ENCODE measurements at regions of chr6 and their contacts with region 1.

Region 1: DNA sequence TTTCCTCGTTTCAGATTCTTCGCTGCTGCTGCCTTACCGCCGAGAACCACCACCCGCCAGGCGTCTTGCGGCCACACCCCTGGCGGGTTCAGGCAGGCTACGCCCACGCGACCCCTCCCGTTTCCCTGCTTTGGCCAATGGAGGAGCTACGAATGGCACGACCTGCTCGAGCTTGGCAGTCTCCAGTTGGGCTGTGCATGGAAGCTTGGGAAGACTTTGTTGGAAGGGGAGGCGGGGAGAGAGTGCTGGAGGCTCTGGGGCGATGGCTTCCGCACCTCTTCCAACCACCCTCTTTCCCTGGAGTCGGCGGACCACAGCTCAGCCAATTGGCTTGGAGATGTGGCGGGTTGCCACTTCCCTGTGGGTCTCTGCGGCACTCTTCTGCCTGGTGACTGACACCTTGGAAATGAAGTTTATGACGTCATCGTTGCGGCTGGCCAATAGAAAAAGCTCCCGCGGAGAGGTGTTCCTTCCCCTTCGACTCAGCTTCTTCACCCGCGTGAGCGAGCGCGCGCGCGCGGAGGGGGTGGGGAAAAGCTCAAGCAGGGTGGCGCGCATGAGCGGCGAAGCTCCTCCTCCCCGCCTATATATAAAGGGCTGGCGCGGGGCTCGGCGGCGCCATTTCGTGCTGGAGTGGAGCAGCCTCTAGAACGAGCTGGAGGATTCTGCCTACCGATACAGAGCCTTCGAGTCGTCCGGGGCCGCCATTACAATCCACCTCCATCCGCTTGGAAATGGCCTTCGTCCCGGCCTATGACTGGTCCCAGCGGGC is 3.4 kb downstream of the BRD2 start:
- DNase-seq: peak; percentile 100
- H3K4me3 ChIP-seq: peak overlapping the region; percentile 83 to 96 (median 91)
- H3K27ac ChIP-seq: peak overlapping the region; percentile 99
- H3K4me1 ChIP-seq: peaks cover 29% of the 10 kb centered on the region
- H3K27me3 ChIP-seq: no peaks in the 10 kb centered on the region
- CTCF ChIP-seq: no peak
- POLR2A ChIP-seq: peak; percentile 100

Region 2: DNA sequence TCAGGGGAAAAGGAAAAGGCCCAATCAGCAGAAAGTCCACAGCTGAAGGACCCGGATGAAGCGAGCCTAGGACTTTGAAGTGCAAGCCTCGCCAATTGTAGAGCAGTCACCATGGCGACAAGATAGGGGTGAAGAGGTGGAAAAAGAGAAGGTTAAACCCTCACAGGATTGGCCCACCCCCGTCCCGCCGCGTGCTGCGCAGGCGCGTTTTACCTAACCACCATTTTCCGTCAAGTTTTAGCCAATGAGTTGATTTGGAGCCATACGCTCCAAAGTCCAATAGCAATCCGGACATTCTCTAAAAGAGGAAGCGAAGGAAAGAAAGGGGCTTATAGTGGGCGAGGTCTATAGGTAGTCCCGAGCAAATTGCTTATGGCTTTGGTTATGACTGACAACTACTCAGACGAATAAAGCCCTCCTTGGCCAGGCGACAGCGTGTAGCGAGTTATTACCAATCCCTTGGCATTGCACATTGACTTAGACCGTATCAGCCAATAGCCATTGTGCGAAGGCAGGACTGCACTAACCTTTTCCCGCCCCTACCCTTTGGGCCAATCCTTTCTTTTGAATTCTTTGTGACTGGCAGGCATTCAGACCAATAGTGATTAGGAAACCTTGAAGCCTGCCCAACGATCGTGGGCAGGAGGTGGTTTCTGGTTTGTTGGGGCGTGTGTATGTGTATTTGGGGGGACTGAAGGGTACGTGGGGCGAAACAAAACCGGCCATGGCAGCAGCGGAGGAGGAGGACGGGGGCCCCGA is 793.8 kb before region 1 on chr6 and contains the start of gene RNF5:
- CTCF ChIA-PET with region 1: no interaction called
- POLR2A ChIA-PET with region 1: no interaction called
- dilution Hi-C with region 1: no loop called
- intact Hi-C with region 1: loop called (anchors 5 kb)
- DNase-seq: peak; percentile 100
- H3K4me3 ChIP-seq: peak within 1 kb of the TSS; percentile 56 to 67 (median 66)
- H3K27ac ChIP-seq: peak within 1 kb of the TSS; percentile 83
- H3K4me1 ChIP-seq: peaks cover 30% of the 10 kb centered on the region
- H3K27me3 ChIP-seq: no peaks in the 10 kb centered on the region
- CTCF ChIP-seq: no peak
- POLR2A ChIP-seq: no peak
- total RNA-seq, gene RNF5: 48.0 and 49.2 TPM in 2 replicates

Region 3: DNA sequence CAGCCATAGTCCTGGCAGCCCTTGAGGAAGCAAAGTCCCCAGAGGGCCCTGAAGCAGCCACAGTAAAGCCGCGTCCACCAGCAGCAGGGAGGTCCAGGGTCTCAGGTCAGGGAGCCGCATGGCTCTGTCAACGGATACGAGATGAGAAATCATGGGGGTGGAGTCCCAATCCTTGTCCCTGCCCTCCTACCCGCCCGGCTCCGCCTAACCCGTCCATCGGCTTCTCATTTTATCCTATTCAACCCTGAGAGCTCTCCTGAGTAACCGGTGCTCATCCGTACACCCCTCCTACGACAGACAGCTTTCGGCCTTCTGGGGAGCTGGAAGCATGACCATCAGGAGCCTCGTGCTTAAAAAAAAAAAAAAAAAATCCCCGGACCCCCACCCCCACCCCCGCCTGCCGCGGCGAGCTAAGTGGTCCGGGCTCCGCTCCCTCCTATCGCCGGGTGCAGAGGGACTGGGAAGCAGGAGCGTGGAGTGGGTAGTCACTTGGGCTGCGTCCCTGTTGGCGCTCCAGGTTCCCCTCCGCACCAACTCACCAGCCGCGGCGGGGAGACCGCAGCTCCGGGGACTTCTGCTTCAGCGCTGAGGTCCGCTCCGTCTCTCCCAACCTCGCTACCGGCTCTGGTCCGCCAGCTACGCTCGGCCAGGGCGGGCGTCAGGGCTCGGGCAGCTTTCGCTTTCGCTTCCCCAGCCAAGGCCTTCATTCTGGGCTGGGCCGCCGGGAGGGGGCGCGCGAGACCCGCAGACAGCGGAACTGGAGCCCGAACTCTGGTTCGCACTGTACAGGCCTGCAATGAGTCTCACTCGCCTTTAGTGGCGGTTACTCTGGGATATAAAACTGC is 133.4 kb before region 1 on chr6 and contains the start of gene TAP2:
- CTCF ChIA-PET with region 1: interaction called, 15 read pairs
- POLR2A ChIA-PET with region 1: interaction called, 16 read pairs
- dilution Hi-C with region 1: no loop called
- intact Hi-C with region 1: loop called (anchors 5 kb)
- DNase-seq: peak; percentile 94
- H3K4me3 ChIP-seq: peak within 1 kb of the TSS; percentile 30 to 89 (median 70)
- H3K27ac ChIP-seq: peak within 1 kb of the TSS; percentile 54
- H3K4me1 ChIP-seq: peaks cover 9% of the 10 kb centered on the region
- H3K27me3 ChIP-seq: no peaks in the 10 kb centered on the region
- CTCF ChIP-seq: peak; percentile 92 to 99
- POLR2A ChIP-seq: peak; percentile 64
- total RNA-seq, gene TAP2: 49.7 and 57.8 TPM in 2 replicates

Region 4: GRCh38 chr6:32885698-32886286 is 86.0 kb before region 1 on chr6:
- CTCF ChIA-PET with region 1: interaction called, 16 read pairs
- POLR2A ChIA-PET with region 1: interaction called, 14 read pairs
- dilution Hi-C with region 1: no loop called
- intact Hi-C with region 1: no loop called
- DNase-seq: peak; percentile 72
- H3K4me3 ChIP-seq: no peak overlapping the region
- H3K27ac ChIP-seq: no peak overlapping the region
- H3K4me1 ChIP-seq: peaks cover under 1% of the 10 kb centered on the region
- H3K27me3 ChIP-seq: peaks cover 28 to 30% of the 10 kb centered on the region in 2 experiments
- CTCF ChIP-seq: peak; percentile 34
- POLR2A ChIP-seq: no peak

Region 5: GRCh38 chr6:32933636-32934085 is 38.1 kb before region 1 on chr6:
- CTCF ChIA-PET with region 1: interaction called, 187 read pairs
- POLR2A ChIA-PET with region 1: interaction called, 30 read pairs
- dilution Hi-C with region 1: no loop called
- intact Hi-C with region 1: loop called (anchors 2 kb)
- DNase-seq: peak; percentile 76
- H3K4me3 ChIP-seq: no peak overlapping the region
- H3K27ac ChIP-seq: no peak overlapping the region
- H3K4me1 ChIP-seq: no peaks in the 10 kb centered on the region
- H3K27me3 ChIP-seq: peaks cover 41 to 73% of the 10 kb centered on the region in 2 experiments
- CTCF ChIP-seq: peak; percentile 73
- POLR2A ChIP-seq: no peak

Region 6: DNA sequence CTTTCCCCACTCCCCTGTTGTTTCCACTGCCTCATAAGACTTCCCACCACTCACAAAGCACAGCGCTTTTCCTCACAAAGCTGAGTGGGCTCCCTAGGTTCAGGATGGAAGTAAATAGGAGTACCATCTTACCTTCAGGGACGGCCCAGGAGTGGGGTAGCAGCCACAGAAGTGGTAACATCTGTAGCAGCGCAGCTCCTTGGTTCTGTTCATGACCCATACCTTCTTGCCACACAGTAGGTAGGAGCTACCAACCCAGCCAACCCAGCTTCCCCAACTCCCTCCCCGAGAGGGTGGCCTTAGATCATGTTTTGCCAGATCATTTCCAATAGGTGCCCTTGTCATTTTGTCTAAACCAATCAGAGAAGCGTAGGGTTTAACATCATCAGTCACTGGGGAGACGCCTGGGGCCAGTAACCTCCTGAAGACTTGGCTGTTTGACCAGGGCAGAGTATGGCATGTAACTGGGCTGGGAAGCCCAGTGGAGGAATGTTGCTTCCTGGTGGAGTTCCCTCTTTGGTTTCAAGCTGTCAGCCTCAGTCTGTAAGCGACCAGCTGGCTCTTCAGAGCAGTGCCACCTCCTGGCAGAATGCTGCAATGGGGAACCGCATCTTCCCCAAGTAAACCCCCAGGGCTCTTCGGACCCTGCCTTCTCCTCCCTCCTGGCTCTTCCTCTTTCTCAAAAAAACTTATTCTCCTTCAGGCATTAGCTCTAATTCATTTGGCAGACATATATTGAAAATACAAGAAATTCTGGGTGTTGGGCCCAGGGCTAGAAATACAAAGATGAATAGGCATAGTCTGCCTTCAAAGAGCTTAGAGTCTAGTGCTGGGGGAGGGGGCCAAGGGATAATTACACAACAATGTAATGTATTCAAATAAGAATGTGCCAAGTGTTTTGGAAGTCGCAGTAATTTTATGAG is 18.7 kb before region 1 on chr6 and contains the start of gene HLA-DMA:
- CTCF ChIA-PET with region 1: interaction called, 52 read pairs
- POLR2A ChIA-PET with region 1: interaction called, 58 read pairs
- dilution Hi-C with region 1: no loop called
- intact Hi-C with region 1: loop called (anchors 1 kb)
- DNase-seq: peak; percentile 96
- H3K4me3 ChIP-seq: no peak within 1 kb of the TSS
- H3K27ac ChIP-seq: no peak within 1 kb of the TSS
- H3K4me1 ChIP-seq: no peaks in the 10 kb centered on the region
- H3K27me3 ChIP-seq: no peaks in the 10 kb centered on the region
- CTCF ChIP-seq: peak; percentile 80 to 81
- POLR2A ChIP-seq: no peak
- total RNA-seq, gene HLA-DMA: 0.53 and 1.2 TPM in 2 replicates

Region 7: GRCh38 chr6:33317669-33318425 is 346.1 kb after region 1 on chr6 and contains the start of gene ZBTB22:
- CTCF ChIA-PET with region 1: no interaction called
- POLR2A ChIA-PET with region 1: interaction called, 10 read pairs
- dilution Hi-C with region 1: no loop called
- intact Hi-C with region 1: no loop called
- DNase-seq: peak; percentile 99
- H3K4me3 ChIP-seq: peak within 1 kb of the TSS; percentile 60 to 87 (median 87)
- H3K27ac ChIP-seq: peak within 1 kb of the TSS; percentile 71
- H3K4me1 ChIP-seq: peaks cover 55% of the 10 kb centered on the region
- H3K27me3 ChIP-seq: no peaks in the 10 kb centered on the region
- CTCF ChIP-seq: no peak
- POLR2A ChIP-seq: no peak
- total RNA-seq, gene ZBTB22: 12.6 and 13.9 TPM in 2 replicates

Measured in endothelial cell of umbilical vein (primary cell).